ENCODE measurements at regions of chr19 and their contacts with region 1.

Region 1: GRCh38 chr19:11452620-11453310 is 17.3 kb downstream of the PRKCSH start:
- DNase-seq: no peak
- H3K4me3 Mint-ChIP-seq: no peak overlapping the region
- H3K27ac Mint-ChIP-seq: no peak overlapping the region
- H3K4me1 Mint-ChIP-seq: no peaks in the 10 kb centered on the region
- H3K27me3 Mint-ChIP-seq: no peaks in the 10 kb centered on the region
- CTCF ChIP-seq: no peak

Region 2: DNA sequence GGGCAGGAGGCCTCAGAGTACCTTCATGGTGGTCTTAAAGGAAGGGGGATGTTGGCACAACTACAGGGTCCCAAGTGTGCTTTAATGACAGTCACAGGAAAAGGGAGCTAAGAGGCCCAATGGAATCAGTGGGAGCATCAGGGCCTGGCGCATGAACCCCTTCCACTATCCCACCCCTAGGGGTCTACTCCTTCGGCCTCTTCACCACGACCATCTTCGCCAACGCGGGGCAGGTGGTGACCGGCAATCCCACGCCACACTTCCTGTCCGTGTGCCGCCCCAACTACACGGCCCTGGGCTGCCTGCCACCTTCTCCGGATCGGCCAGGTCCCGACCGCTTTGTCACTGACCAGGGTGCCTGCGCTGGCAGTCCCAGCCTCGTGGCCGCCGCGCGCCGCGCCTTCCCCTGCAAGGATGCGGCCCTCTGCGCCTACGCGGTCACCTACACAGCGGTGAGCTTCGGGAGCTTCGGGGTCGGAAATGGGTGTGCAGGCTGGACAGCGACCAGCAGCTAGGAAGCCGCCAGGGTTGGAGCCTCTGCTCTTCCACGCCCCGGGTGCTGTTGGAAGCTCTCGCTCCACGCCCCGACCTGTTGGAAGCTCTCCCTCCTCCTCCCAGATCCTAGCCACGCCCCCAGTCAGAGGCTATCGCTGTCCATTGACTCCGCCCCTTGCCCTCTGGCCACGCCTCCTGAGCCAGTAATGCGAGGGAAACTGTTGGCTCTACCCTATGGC is 91.6 kb before region 1 on chr19:
- CTCF ChIA-PET with region 1: no interaction called
- intact Hi-C with region 1: no loop called
- DNase-seq: no peak
- H3K4me3 Mint-ChIP-seq: no peak overlapping the region
- H3K27ac Mint-ChIP-seq: no peak overlapping the region
- H3K4me1 Mint-ChIP-seq: peaks cover 1% of the 10 kb centered on the region
- H3K27me3 Mint-ChIP-seq: peaks cover 27% of the 10 kb centered on the region
- CTCF ChIP-seq: no peak

Region 3: DNA sequence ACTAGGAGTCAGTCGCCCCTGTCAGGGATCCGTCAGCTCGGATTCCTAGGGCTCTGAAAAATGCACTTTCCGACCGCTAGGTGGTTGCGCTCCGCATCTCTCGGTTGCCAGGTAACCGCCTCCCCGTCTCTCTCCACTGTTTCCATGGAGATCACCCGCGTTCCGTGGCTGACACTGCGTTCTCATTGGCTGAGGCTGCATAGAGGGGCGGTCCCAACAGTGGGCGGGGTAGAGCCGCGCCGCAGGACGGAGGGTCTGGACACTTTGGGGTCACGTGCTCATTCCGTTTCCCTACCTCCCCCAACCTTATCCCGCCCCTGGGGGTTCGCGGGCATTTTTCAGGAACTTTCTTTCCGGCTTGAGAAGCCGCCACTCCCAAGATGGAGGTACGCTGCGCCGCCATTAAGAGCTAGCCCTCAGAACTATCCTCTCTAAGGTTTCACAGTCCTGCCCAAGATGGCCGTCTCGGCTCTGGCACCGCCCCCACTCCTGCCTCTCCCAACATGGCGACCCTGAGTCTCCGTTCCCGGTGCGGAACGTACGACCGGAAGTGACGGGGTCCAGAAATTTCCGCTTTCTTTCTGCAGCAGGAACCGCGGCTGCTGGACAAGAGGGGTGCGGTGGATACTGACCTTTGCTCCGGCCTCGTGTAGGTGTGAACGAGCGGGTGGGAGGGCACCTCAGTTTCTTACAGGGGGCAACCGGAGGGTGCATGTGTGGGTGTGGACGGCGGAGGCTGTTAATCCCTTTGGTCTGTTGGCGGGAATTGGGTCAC is 17.5 kb before region 1 on chr19 and contains the starts of genes ODAD3 and PRKCSH:
- CTCF ChIA-PET with region 1: no interaction called
- intact Hi-C with region 1: no loop called
- DNase-seq: peak; percentile 96
- H3K4me3 Mint-ChIP-seq: peak within 1 kb of the TSS; percentile 91
- H3K27ac Mint-ChIP-seq: peak within 1 kb of the TSS; percentile 88
- H3K4me1 Mint-ChIP-seq: no peaks in the 10 kb centered on the region
- H3K27me3 Mint-ChIP-seq: no peaks in the 10 kb centered on the region
- CTCF ChIP-seq: peak; percentile 70
- total RNA-seq, gene ODAD3: not detected in 2 replicates
- total RNA-seq, gene PRKCSH: 298 and 318 TPM in 2 replicates

Region 4: GRCh38 chr19:11587302-11587974 is 134.7 kb after region 1 on chr19:
- CTCF ChIA-PET with region 1: interaction called, 10 read pairs
- intact Hi-C with region 1: no loop called
- DNase-seq: peak; percentile 71
- H3K4me3 Mint-ChIP-seq: no peak overlapping the region
- H3K27ac Mint-ChIP-seq: no peak overlapping the region
- H3K4me1 Mint-ChIP-seq: peaks cover 11% of the 10 kb centered on the region
- H3K27me3 Mint-ChIP-seq: no peaks in the 10 kb centered on the region
- CTCF ChIP-seq: peak; percentile 72